Activated CD8-positive, alpha-beta T cell treated with anti-CD3 and anti-CD28 coated beads, Interleukin-2, amount 10 ng/mL, durations not matched to agents 7 days and 5 days (primary cell): ENCODE measurements at regions of chr4 and their contacts with region 1.

Region 1: GRCh38 chr4:10461091-10461849 is 4.0 kb upstream of the ZNF518B start:
- DNase-seq: peak; percentile 79
- ATAC-seq: peak; percentile 86
- H3K4me3 Mint-ChIP-seq: peak overlapping the region; percentile 73
- H3K27ac Mint-ChIP-seq: no peak overlapping the region
- H3K4me1 Mint-ChIP-seq: peaks cover 33% of the 10 kb centered on the region
- H3K27me3 Mint-ChIP-seq: peaks cover 38% of the 10 kb centered on the region

Region 2: DNA sequence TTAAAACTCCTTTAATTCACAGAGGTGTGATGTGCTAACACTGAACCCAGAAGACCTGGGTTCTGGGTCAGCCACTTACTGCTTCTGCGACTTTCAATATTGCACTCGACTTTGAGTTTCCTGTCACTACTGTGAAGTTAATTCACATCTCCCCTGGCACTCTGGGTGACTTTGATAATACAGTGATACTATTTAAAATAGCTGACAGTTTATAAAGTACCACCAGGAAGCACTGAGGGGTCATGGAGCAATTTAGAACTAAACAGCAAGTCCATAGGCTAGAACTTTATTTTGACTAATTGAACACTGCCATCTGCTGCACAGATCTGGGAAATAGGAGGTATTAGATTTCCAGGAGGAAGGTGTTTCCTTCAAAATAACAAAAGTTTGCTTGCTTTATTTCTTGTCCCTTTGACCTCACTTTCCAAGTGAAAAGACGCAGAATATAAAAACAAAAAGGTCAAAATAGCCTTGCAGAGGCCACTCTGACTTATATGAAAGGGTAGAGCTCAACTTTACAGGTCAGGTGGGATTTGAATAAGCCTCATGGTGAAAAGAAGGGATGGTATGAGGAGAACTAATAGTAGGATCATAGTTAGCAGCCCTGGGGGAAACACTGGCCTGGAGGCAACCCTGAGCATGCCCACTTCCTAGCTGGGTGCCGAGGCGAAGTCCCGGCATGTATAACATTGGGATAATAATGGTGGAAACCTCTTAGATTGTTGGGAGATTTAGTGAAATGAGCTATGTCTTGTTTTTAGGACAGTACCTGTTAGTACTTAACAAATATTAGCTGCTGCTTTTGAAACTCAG is 57.4 kb before region 1 on chr4:
- CTCF ChIA-PET with region 1: interaction called, 12 read pairs
- POLR2A ChIA-PET with region 1: no interaction called
- DNase-seq: peak; percentile 40
- ATAC-seq: no peak
- H3K4me3 Mint-ChIP-seq: no peak overlapping the region
- H3K27ac Mint-ChIP-seq: no peak overlapping the region
- H3K4me1 Mint-ChIP-seq: no peaks in the 10 kb centered on the region
- H3K27me3 Mint-ChIP-seq: peaks cover 14% of the 10 kb centered on the region

Region 3: GRCh38 chr4:10421344-10422055 is 39.8 kb before region 1 on chr4:
- CTCF ChIA-PET with region 1: interaction called, 16 read pairs
- POLR2A ChIA-PET with region 1: interaction called, 6 read pairs
- DNase-seq: peak; percentile 25
- ATAC-seq: peak; percentile 57
- H3K4me3 Mint-ChIP-seq: no peak overlapping the region
- H3K27ac Mint-ChIP-seq: peak overlapping the region; percentile 72
- H3K4me1 Mint-ChIP-seq: peaks cover 25% of the 10 kb centered on the region
- H3K27me3 Mint-ChIP-seq: peaks cover 13% of the 10 kb centered on the region

Region 4: GRCh38 chr4:10535912-10536311 is 74.6 kb after region 1 on chr4:
- CTCF ChIA-PET with region 1: interaction called, 19 read pairs
- POLR2A ChIA-PET with region 1: no interaction called
- DNase-seq: no peak
- ATAC-seq: no peak
- H3K4me3 Mint-ChIP-seq: no peak overlapping the region
- H3K27ac Mint-ChIP-seq: no peak overlapping the region
- H3K4me1 Mint-ChIP-seq: no peaks in the 10 kb centered on the region
- H3K27me3 Mint-ChIP-seq: peaks cover 14% of the 10 kb centered on the region